Uterus (tissue), 4 donors: ENCODE measurements at regions of chr10 and their contacts with region 1.

Region 1: DNA sequence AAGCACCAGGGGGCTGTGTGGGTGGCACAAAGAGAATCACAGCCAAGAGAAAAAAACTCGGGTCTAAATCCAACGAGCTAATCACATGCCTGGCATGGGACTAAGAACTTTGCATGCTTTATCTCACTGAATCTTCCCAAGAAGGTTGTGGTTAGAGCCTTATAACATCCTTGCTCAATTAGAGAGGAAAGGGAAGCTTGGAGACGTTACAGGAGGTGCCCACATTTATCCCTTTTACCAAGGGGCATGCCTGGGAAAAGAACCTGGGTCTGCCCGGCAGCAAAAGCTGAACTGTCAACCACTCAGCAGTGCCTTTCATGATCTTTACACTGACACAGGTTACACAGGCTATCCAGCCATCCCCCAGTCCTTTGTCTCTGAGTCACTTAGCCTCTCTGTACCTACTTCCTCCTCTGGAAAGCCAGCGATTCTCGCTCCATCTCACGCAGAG is 190.1 kb downstream of the PRPF18 start:
- DNase-seq: no peak
- H3K4me3 ChIP-seq: no peak overlapping the region
- H3K27ac ChIP-seq: no peak overlapping the region
- H3K4me1 ChIP-seq: no peaks in the 10 kb centered on the region
- H3K27me3 ChIP-seq: no peaks in the 10 kb centered on the region
- CTCF ChIP-seq: no peak
- POLR2A ChIP-seq: no peak

Region 2: DNA sequence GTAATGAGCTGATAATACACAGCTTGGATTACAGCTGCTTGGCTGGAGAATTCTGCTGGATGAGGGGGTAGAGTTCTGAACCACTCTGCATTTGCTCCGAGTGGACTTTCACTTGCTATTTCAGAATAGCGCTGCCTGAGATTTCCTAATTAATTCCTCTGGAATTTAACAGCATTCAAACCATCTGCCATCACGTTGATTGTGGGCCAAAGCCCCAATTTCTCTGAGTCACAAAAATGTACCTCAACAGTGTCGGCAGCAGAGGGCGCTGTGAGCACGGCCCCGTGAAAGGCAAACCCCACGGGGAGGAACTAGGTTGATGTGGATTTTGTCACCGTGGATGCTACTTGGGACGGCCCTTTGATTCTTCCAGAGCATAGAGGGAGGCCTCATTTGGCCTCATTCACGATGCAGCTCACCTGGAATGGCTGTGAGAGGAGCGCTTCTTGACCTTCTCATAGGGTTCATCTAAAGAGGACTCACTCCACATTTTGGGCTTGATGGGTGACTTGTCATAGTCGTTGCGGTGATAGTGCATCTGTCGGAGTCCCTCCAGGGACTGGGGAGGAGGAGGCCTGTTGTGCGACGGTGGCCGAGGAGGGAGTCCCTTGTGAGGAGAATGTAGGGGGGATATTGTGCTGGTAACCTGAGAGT is 116.9 kb before region 1 on chr10:
- intact Hi-C with region 1: loop called (anchors 5 kb)
- DNase-seq: peak; percentile 65 to 76
- H3K4me3 ChIP-seq: no peak overlapping the region
- H3K27ac ChIP-seq: peak overlapping the region; percentile 5 to 14
- H3K4me1 ChIP-seq: no peaks in the 10 kb centered on the region
- H3K27me3 ChIP-seq: no peaks in the 10 kb centered on the region
- CTCF ChIP-seq: peak; percentile 76 to 83 (median 80)
- POLR2A ChIP-seq: no peak